ENCODE measurements at regions of chr14 and their contacts with region 1.

Region 1: DNA sequence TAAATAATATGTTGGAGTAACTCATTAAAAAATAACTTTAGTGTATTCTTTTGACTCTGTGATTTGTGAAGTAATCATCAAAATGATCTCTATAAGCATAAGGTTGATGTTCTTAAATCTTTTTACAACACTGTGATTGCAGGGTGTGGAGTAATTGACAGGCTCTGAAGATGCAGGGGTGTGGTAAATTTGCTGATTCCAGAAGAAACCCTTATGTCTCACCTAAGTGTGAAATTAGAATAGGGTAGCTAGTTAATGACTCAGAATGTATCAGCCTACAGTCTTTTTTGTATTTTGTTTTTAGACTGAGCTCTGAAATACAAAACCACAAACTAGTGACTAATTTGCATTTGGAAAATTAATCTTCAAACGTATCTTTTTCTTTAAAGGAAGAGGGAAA is 5.9 kb downstream of the PRPF39 start:
- DNase-seq: peak; percentile 20
- H3K4me3 Mint-ChIP-seq: peak overlapping the region; percentile 52
- H3K27ac Mint-ChIP-seq: peak overlapping the region; percentile 70
- H3K4me1 Mint-ChIP-seq: peaks cover 73% of the 10 kb centered on the region
- H3K27me3 Mint-ChIP-seq: no peaks in the 10 kb centered on the region

Region 2: DNA sequence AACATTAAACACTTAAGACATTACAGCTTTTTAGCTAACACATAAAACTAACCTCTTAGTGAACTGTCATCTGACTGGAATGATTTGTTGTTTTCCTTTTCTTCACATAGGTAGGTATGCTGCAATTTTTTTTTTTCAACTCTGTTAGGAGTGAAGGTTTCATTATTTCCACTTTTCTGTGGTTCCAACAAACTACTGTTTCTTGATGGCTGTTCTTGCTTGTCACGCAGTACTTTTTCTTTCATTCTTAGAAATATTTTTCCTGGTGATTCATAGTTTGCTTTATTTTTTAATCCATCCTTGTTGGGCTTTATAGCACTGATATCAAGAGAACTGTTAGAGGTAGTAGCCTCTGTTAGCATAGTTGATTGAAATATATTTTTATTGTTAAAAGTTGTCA is 156.9 kb after region 1 on chr14:
- CTCF ChIA-PET with region 1: no interaction called
- POLR2A ChIA-PET with region 1: no interaction called
- intact Hi-C with region 1: loop called (anchors 1 kb)
- DNase-seq: no peak
- H3K4me3 Mint-ChIP-seq: no peak overlapping the region
- H3K27ac Mint-ChIP-seq: no peak overlapping the region
- H3K4me1 Mint-ChIP-seq: peaks cover 14% of the 10 kb centered on the region
- H3K27me3 Mint-ChIP-seq: no peaks in the 10 kb centered on the region